CD4-positive, alpha-beta memory T cell (primary cell): ENCODE measurements at regions of chr3 and their contacts with region 1.

Region 1: DNA sequence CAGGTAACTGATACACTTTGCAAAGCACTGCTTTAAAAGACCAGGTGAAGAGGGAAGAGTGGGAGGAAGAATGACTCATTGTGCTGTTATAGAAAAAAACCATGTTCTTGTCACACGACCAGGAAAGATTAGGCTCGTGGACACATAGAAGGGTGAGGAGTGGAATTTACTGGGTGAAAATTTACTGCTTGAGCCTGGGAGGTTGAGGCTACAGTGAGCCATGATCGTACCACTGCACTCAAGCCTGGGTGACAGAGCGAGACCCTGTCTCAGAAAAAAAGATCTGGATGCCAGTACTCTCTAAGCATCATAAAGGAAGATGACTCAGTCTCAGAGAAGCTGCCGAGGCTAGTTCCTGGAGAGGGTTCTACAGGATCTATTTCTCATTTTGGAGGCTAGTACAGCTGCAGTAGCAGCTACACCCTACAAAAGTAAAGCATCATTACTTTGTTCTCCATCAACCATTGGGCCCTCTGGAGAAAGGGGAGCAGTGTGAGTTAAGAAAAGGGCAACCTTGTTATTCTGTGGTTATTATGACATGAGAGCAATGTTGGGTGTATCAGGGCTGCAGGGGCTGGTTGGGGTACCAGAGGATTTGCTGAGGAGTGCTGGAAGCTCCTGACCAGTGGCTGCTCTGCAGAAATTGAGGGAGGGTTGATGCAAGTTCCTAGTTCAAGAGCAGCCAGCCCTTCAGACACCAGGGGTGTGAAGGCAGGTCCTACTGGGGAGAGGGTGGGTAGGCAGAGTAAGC is 75.4 kb downstream of the CMTM8 start:
- DNase-seq: peak in 1 of 5 donors; percentile 47
- H3K4me3 ChIP-seq: no peak overlapping the region
- H3K4me3 Mint-ChIP-seq: peak overlapping the region; percentile 15 to 81 (median 51)
- H3K27ac ChIP-seq: peak overlapping the region; percentile 19
- H3K27ac Mint-ChIP-seq: peak overlapping the region; percentile 75 to 94 (median 86)
- H3K4me1 ChIP-seq: peaks cover 23% of the 10 kb centered on the region
- H3K4me1 Mint-ChIP-seq: peaks cover 24 to 40% (median 31%) of the 10 kb centered on the region in 4 donors
- H3K27me3 ChIP-seq: no peaks in the 10 kb centered on the region
- H3K27me3 Mint-ChIP-seq: no peaks in the 10 kb centered on the region

Region 2: DNA sequence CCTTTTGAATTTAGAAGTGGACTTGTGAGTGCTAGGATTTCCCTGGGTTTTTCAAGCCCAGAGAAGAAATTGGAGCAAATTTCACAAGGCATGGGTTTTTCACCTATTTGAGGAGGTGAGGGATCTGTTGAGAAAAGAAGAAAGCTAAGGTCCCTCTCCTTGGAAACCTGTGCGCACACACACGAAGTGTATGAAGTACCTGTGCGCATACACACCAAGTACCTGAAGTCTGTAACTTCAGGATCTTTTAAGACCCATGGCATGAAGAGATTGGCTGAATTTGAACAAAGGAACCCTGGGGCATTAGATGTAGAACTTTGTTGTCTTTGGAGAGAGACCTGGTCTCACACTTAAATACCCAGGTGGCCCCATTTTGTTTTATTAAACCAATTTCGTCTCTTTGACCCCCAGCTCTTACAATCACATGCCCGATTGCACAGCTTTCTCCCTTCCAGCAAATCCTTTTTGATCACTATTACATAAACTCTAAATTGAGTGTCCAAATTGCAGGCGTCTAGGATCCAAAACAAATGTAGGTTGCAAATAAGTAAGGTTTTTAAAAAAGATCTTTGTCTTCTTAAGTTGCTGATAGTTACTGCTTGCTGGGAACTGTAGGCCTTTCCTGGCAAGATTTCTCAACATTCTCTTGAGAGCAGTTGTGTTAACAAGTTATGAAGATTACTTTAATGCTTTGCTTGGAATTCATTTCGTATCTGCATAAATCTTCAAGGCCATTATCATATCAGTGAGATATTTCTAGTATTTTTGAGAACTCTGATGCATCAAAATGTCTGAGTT is 11.1 kb before region 1 on chr3:
- CTCF ChIA-PET with region 1: interaction called, 77 read pairs
- POLR2A ChIA-PET with region 1: interaction called, 50 read pairs
- intact Hi-C with region 1: loop called (anchors 1 kb)
- DNase-seq: no peak
- H3K4me3 ChIP-seq: peak overlapping the region in 1 of 2 donors; percentile 27
- H3K4me3 Mint-ChIP-seq: peak overlapping the region; percentile 37 to 82 (median 72)
- H3K27ac ChIP-seq: peak overlapping the region; percentile 60
- H3K27ac Mint-ChIP-seq: peak overlapping the region; percentile 83 to 97 (median 93)
- H3K4me1 ChIP-seq: peaks cover 75% of the 10 kb centered on the region
- H3K4me1 Mint-ChIP-seq: peaks cover 51 to 84% (median 71%) of the 10 kb centered on the region in 4 donors
- H3K27me3 ChIP-seq: no peaks in the 10 kb centered on the region
- H3K27me3 Mint-ChIP-seq: no peaks in the 10 kb centered on the region

Region 3: GRCh38 chr3:32325957-32326356 is 12.1 kb after region 1 on chr3:
- CTCF ChIA-PET with region 1: interaction called, 18 read pairs
- POLR2A ChIA-PET with region 1: interaction called, 9 read pairs
- intact Hi-C with region 1: no loop called
- DNase-seq: no peak
- H3K4me3 ChIP-seq: no peak overlapping the region
- H3K4me3 Mint-ChIP-seq: no peak overlapping the region
- H3K27ac ChIP-seq: no peak overlapping the region
- H3K27ac Mint-ChIP-seq: no peak overlapping the region
- H3K4me1 ChIP-seq: no peaks in the 10 kb centered on the region
- H3K4me1 Mint-ChIP-seq: peaks cover 8 to 20% (median 13%) of the 10 kb centered on the region in 4 donors
- H3K27me3 ChIP-seq: no peaks in the 10 kb centered on the region
- H3K27me3 Mint-ChIP-seq: no peaks in the 10 kb centered on the region